ENCODE measurements at regions of chr16 and their contacts with region 1.

Region 1: GRCh38 chr16:16052916-16053315 is 103.5 kb downstream of the ABCC1 start:
- DNase-seq: no peak
- ATAC-seq: no peak
- H3K4me3 ChIP-seq: no peak overlapping the region
- H3K27ac ChIP-seq: no peak overlapping the region
- H3K4me1 ChIP-seq: peaks cover 20% of the 10 kb centered on the region
- H3K27me3 ChIP-seq: no peaks in the 10 kb centered on the region
- CTCF ChIP-seq: no peak

Region 2: DNA sequence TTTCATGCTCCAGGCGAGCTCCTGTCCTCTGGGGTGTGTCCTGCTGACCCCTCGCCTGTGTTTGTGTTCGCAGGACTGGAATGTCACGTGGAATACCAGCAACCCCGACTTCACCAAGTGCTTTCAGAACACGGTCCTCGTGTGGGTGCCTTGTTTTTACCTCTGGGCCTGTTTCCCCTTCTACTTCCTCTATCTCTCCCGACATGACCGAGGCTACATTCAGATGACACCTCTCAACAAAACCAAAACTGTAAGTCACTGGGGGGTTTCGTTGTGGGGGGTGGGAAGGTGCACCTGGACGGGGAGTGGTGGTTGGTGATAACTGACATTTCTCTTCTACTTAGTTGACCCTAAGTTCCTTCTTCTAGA is 45.2 kb before region 1 on chr16:
- intact Hi-C with region 1: loop called in 1 of 2 experiments (anchors 10 kb)
- DNase-seq: peak in 1 of 2 donors; percentile 15
- ATAC-seq: no peak
- H3K4me3 ChIP-seq: no peak overlapping the region
- H3K27ac ChIP-seq: peak overlapping the region; percentile 24
- H3K4me1 ChIP-seq: peaks cover 31% of the 10 kb centered on the region
- H3K27me3 ChIP-seq: no peaks in the 10 kb centered on the region
- CTCF ChIP-seq: no peak